T-cell (primary cell): ENCODE measurements at regions of chr1 and their contacts with region 1.

Region 1: GRCh38 chr1:21397813-21398188 is 42.1 kb upstream of the NBPF3 start:
- DNase-seq: peak in 20 of 35 experiments; percentile 0 to 33 (median 4)
- ATAC-seq: peak in 3 of 4 experiments; percentile 30 to 60 (median 46)
- H3K4me3 ChIP-seq: peak overlapping the region; percentile 43 to 44
- H3K4me3 Mint-ChIP-seq: peak overlapping the region; percentile 66 to 71 (median 70)
- H3K27ac ChIP-seq: no peak overlapping the region
- H3K27ac Mint-ChIP-seq: no peak overlapping the region
- H3K4me1 ChIP-seq: peaks cover 2 to 8% of the 10 kb centered on the region in 2 experiments
- H3K4me1 Mint-ChIP-seq: peaks cover 7 to 11% (median 9%) of the 10 kb centered on the region in 3 donors
- H3K27me3 ChIP-seq: peaks cover 0 to 6% of the 10 kb centered on the region in 2 experiments
- H3K27me3 Mint-ChIP-seq: peaks cover 11 to 17% of the 10 kb centered on the region in 2 donors

Region 2: DNA sequence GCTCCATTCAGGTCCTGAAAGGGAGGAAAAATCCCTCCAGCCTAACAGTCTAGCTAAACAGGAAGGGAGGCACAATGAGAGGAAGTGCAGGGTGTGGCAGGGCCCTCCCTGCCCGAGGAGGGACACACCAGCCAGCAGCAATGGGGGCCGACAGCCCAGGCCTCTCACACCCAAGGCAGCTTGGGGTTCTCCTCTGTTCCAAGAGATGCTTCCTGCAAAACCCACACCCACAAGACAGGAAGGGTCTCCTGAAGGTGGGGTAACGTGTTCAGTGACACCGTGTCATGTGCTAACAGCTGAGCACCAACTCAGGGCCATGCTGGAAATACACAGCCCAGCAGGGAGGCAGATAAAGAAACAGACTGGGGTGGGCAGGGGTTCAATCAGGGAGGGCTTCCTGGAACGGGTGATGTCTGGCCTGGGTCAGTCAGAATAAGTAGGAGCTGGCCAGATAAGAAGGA is 117.8 kb before region 1 on chr1:
- CTCF ChIA-PET with region 1: no interaction called
- POLR2A ChIA-PET with region 1: no interaction called
- DNase-seq: peak in 4 of 35 experiments; percentile 12 to 39 (median 32)
- ATAC-seq: peak; percentile 67 to 91 (median 76)
- H3K4me3 ChIP-seq: peak overlapping the region in 1 of 2 donors; percentile 1
- H3K4me3 Mint-ChIP-seq: peak overlapping the region; percentile 37 to 83 (median 70)
- H3K27ac ChIP-seq: peak overlapping the region; percentile 82
- H3K27ac Mint-ChIP-seq: peak overlapping the region; percentile 98
- H3K4me1 ChIP-seq: peaks cover 15 to 56% of the 10 kb centered on the region in 2 experiments
- H3K4me1 Mint-ChIP-seq: peaks cover 51 to 64% (median 52%) of the 10 kb centered on the region in 3 donors
- H3K27me3 ChIP-seq: no peaks in the 10 kb centered on the region
- H3K27me3 Mint-ChIP-seq: no peaks in the 10 kb centered on the region

Region 3: DNA sequence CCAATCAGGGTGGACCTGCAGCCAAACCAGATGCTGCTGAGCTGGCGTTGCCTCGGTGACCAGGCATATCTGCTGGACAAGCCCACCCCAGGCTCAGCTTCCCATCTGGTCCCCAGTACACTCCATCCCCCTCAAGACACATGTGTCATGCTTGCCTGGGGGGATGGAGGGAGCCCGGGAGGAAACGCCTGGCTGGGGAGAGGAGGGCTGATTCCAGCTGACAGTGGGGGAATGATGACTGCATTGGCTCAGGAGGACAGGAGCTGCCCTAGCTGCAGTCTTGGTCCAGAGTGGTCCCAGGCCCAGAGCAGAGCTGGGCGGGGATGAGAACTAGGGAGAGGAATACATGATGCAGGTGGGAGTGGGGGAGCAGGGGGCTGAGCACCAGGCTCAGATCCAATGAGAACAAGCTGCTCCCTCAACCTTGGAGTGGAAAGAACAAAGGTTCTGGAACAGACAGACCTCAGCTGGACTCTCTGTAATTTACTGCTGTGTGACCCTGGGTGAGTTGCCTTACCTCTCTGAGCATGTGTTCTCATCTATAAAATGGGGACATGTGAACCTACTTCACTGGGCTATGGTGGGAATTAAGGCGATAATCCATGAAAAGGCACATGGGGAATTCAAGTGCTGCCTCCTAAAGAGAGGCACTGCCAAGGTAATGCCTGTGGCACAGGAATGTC is 84.5 kb before region 1 on chr1:
- CTCF ChIA-PET with region 1: no interaction called
- POLR2A ChIA-PET with region 1: interaction called in 1 of 2 experiments, 12 read pairs
- DNase-seq: no peak
- ATAC-seq: no peak
- H3K4me3 ChIP-seq: no peak overlapping the region
- H3K4me3 Mint-ChIP-seq: no peak overlapping the region
- H3K27ac ChIP-seq: no peak overlapping the region
- H3K27ac Mint-ChIP-seq: peak overlapping the region; percentile 19 to 25
- H3K4me1 ChIP-seq: peaks cover 7 to 40% of the 10 kb centered on the region in 2 experiments
- H3K4me1 Mint-ChIP-seq: peaks cover 50 to 56% (median 52%) of the 10 kb centered on the region in 3 donors
- H3K27me3 ChIP-seq: no peaks in the 10 kb centered on the region
- H3K27me3 Mint-ChIP-seq: no peaks in the 10 kb centered on the region

Region 4: GRCh38 chr1:21384620-21385019 is 13.2 kb before region 1 on chr1:
- CTCF ChIA-PET with region 1: no interaction called
- POLR2A ChIA-PET with region 1: no interaction called
- DNase-seq: no peak
- ATAC-seq: no peak
- H3K4me3 ChIP-seq: no peak overlapping the region
- H3K4me3 Mint-ChIP-seq: no peak overlapping the region
- H3K27ac ChIP-seq: no peak overlapping the region
- H3K27ac Mint-ChIP-seq: no peak overlapping the region
- H3K4me1 ChIP-seq: no peaks in the 10 kb centered on the region
- H3K4me1 Mint-ChIP-seq: no peaks in the 10 kb centered on the region
- H3K27me3 ChIP-seq: peaks cover 2 to 8% of the 10 kb centered on the region in 2 experiments
- H3K27me3 Mint-ChIP-seq: peaks cover 4 to 10% of the 10 kb centered on the region in 2 donors